ENCODE measurements at regions of chr11 and their contacts with region 1.

Region 1: GRCh38 chr11:87037450-87038234 is at the start of gene TMEM135:
- DNase-seq: peak; percentile 94
- ATAC-seq: peak; percentile 96
- H3K4me3 ChIP-seq: peak within 1 kb of the TSS; percentile 79 to 98 (median 93)
- H3K27ac ChIP-seq: peak within 1 kb of the TSS; percentile 95
- H3K4me1 ChIP-seq: peaks cover 60% of the 10 kb centered on the region
- H3K27me3 ChIP-seq: no peaks in the 10 kb centered on the region; a peak in 1 of 5 replicates
- CTCF ChIP-seq: peak; percentile 60
- EP300 ChIP-seq: peak; percentile 50 to 67; a peak in 3 of 4 replicates
- POLR2A ChIP-seq: peak; percentile 79 to 83
- RAD21 ChIP-seq: peak; percentile 64; the same call in 1 of the 2 replicates
- total RNA-seq, gene TMEM135: 88.9 and 137 TPM in 2 replicates

Region 2: DNA sequence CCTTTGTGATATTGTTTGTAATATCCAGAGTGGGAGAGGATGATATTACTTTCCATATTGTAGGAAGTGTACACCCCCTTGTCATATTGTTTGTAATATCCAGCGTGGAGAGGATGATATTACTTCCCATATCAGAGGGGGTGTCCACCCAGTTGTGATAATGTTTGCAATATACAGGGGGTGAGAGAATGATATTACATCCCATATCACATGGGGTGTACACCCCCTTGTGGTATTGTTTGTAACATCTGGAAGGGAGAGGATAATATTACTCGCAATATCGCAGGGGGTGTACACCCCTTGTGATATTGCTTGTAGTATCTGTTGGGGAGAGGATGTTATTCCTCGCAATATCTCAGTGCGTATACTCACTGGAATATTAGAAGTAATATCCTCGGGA is 175.8 kb before region 1 on chr11:
- CTCF ChIA-PET with region 1: no interaction called
- POLR2A ChIA-PET with region 1: no interaction called
- in situ Hi-C with region 1: no loop called
- intact Hi-C with region 1: no loop called
- DNase-seq: no peak
- ATAC-seq: no peak
- H3K4me3 ChIP-seq: no peak overlapping the region
- H3K27ac ChIP-seq: no peak overlapping the region
- H3K4me1 ChIP-seq: no peaks in the 10 kb centered on the region
- H3K27me3 ChIP-seq: peaks cover 0 to 9% of the 10 kb centered on the region in 2 experiments; a peak in 1 of 5 replicates
- CTCF ChIP-seq: no peak
- EP300 ChIP-seq: no peak
- POLR2A ChIP-seq: no peak
- RAD21 ChIP-seq: no peak

Region 3: DNA sequence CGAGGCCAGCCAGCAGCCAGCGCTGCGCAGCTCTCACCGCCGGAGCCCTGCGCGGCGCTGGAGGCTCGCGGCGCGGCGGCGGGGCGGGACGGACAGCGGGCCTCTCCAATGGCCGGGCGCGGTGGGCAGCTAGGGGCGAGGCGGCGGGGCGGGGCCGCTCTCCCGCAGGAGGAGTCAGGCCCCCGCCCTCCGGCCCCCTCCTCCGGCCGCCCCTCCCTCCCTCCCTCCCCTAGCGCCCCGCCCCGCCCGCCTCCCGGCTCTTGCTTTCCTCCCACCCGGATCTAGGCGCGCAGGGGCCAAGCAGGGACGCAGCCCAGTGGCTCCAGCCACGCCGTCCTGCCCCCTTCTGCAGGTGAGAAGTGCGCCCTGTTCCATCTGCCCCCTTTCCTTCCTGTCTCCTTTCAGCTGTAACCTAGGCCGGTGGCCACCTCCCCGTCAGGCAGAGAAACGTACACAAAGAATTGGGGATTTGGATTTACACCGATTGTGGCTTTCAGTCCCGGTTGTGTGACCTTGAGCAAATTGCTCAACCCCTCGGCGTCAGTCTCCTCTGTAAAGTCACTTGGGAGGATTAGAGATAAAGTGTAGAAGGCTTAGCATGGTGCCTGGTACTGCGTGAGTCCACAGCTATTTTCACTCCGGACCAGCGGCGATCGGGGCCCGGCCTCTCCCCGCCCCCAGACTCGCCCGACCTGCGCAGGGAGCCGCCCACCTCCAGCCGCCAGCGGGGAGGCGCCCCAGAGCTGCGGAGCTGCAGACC is 82.1 kb before region 1 on chr11 and contains the start of gene FZD4:
- CTCF ChIA-PET with region 1: interaction called, 3 read pairs
- POLR2A ChIA-PET with region 1: interaction called, 57 read pairs
- in situ Hi-C with region 1: loop called (anchors 5 kb)
- intact Hi-C with region 1: loop called (anchors 2 kb)
- DNase-seq: peak; percentile 88
- ATAC-seq: peak; percentile 92
- H3K4me3 ChIP-seq: peak within 1 kb of the TSS; percentile 79 to 87 (median 82)
- H3K27ac ChIP-seq: peak within 1 kb of the TSS; percentile 96
- H3K4me1 ChIP-seq: peaks cover 50% of the 10 kb centered on the region
- H3K27me3 ChIP-seq: no peaks in the 10 kb centered on the region; a peak in 1 of 5 replicates
- CTCF ChIP-seq: peak; percentile 71
- EP300 ChIP-seq: peak in 1 of 2 experiments; percentile 23; a peak in 1 of 4 replicates
- POLR2A ChIP-seq: peak; percentile 67 to 68
- RAD21 ChIP-seq: peak; percentile 78; the same call in 1 of the 2 replicates
- total RNA-seq, gene FZD4: 34.7 and 46.5 TPM in 2 replicates

Region 4: GRCh38 chr11:86999859-87000753 is 37.5 kb before region 1 on chr11:
- CTCF ChIA-PET with region 1: no interaction called
- POLR2A ChIA-PET with region 1: interaction called, 48 read pairs
- in situ Hi-C with region 1: loop called (anchors 5 kb)
- intact Hi-C with region 1: loop called (anchors 1 kb)
- DNase-seq: peak; percentile 99
- ATAC-seq: peak; percentile 92
- H3K4me3 ChIP-seq: peak overlapping the region; percentile 31 to 48 (median 34)
- H3K27ac ChIP-seq: peak overlapping the region; percentile 87
- H3K4me1 ChIP-seq: peaks cover 91% of the 10 kb centered on the region
- H3K27me3 ChIP-seq: no peaks in the 10 kb centered on the region
- CTCF ChIP-seq: no peak
- EP300 ChIP-seq: peak; percentile 47 to 80; a peak in 2 of 4 replicates
- POLR2A ChIP-seq: peak in 1 of 2 experiments; percentile 42; a peak in 1 of 4 replicates
- RAD21 ChIP-seq: no peak

Region 5: DNA sequence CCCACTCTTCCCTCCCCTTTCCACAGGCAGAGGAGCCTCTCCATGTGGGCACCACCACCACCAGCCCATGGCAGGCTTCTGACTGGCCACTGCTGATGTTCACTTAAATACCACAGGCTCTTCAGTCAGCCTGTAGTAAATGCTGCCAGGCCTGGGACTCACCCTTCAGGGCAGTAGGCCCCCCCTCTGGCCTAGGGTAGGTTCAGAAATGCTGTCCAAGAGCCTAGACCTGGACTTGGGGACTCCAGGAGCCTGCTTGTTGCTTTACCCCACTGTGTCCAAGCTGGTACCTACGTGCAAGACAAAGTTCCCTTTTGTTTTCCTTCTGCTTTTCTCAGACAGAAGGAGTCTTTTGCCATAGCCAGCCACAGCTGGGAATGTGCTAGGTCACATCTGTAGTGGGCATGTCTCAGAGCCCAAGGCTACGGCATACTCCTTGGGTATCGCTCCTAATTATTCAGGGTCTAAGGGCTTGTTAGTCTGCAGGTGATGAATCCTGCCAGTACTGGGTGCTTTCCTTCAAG is 38.7 kb after region 1 on chr11:
- CTCF ChIA-PET with region 1: no interaction called
- POLR2A ChIA-PET with region 1: interaction called, 8 read pairs
- in situ Hi-C with region 1: no loop called
- intact Hi-C with region 1: loop called (anchors 5 kb)
- DNase-seq: no peak
- ATAC-seq: peak; percentile 55
- H3K4me3 ChIP-seq: no peak overlapping the region
- H3K27ac ChIP-seq: peak overlapping the region; percentile 70
- H3K4me1 ChIP-seq: peaks cover 33% of the 10 kb centered on the region
- H3K27me3 ChIP-seq: no peaks in the 10 kb centered on the region
- CTCF ChIP-seq: no peak
- EP300 ChIP-seq: no peak
- POLR2A ChIP-seq: no peak
- RAD21 ChIP-seq: no peak

Measured in HepG2 (cell line).